ENCODE measurements at regions of chr10 and their contacts with region 1.

Region 1: GRCh38 chr10:3419502-3420495 is 247.2 kb upstream of the PITRM1 start:
- DNase-seq: no peak
- H3K4me3 ChIP-seq: no peak overlapping the region
- H3K4me3 Mint-ChIP-seq: peak overlapping the region in 1 of 2 donors; percentile 72
- H3K27ac ChIP-seq: no peak overlapping the region
- H3K27ac Mint-ChIP-seq: peak overlapping the region in 2 of 7 donors; percentile 74 to 80
- H3K4me1 ChIP-seq: peaks cover 14 to 16% of the 10 kb centered on the region in 2 donors
- H3K4me1 Mint-ChIP-seq: peaks cover 20% of the 10 kb centered on the region
- H3K27me3 ChIP-seq: no peaks in the 10 kb centered on the region
- H3K27me3 Mint-ChIP-seq: peaks cover 0 to 9% (median 9%) of the 10 kb centered on the region in 3 donors
- CTCF ChIP-seq: no peak

Region 2: GRCh38 chr10:3339531-3339950 is 80.3 kb before region 1 on chr10:
- intact Hi-C with region 1: no loop called
- DNase-seq: peak in 2 of 3 donors; percentile 25 to 27
- H3K4me3 ChIP-seq: no peak overlapping the region
- H3K4me3 Mint-ChIP-seq: no peak overlapping the region
- H3K27ac ChIP-seq: peak overlapping the region in 1 of 2 donors; percentile 2
- H3K27ac Mint-ChIP-seq: peak overlapping the region in 1 of 7 donors; percentile 30
- H3K4me1 ChIP-seq: no peaks in the 10 kb centered on the region
- H3K4me1 Mint-ChIP-seq: peaks cover 12% of the 10 kb centered on the region
- H3K27me3 ChIP-seq: no peaks in the 10 kb centered on the region
- H3K27me3 Mint-ChIP-seq: peaks cover 0 to 2% (median 0%) of the 10 kb centered on the region in 3 donors
- CTCF ChIP-seq: no peak

Region 3: GRCh38 chr10:3435671-3436070 is 15.9 kb after region 1 on chr10:
- intact Hi-C with region 1: loop called in 1 of 2 experiments (anchors 2 kb)
- DNase-seq: no peak
- H3K4me3 ChIP-seq: no peak overlapping the region
- H3K4me3 Mint-ChIP-seq: no peak overlapping the region
- H3K27ac ChIP-seq: no peak overlapping the region
- H3K27ac Mint-ChIP-seq: no peak overlapping the region
- H3K4me1 ChIP-seq: no peaks in the 10 kb centered on the region
- H3K4me1 Mint-ChIP-seq: peaks cover 8% of the 10 kb centered on the region
- H3K27me3 ChIP-seq: no peaks in the 10 kb centered on the region
- H3K27me3 Mint-ChIP-seq: peaks cover 0 to 5% (median 1%) of the 10 kb centered on the region in 3 donors
- CTCF ChIP-seq: no peak